Activated CD4-positive, alpha-beta T cell treated with anti-CD3 and anti-CD28 coated beads, Interleukin-2, amount 10 ng/mL, durations not matched to agents 24 days and 14 days (primary cell): ENCODE measurements at regions of chr12 and their contacts with region 1.

Region 1: DNA sequence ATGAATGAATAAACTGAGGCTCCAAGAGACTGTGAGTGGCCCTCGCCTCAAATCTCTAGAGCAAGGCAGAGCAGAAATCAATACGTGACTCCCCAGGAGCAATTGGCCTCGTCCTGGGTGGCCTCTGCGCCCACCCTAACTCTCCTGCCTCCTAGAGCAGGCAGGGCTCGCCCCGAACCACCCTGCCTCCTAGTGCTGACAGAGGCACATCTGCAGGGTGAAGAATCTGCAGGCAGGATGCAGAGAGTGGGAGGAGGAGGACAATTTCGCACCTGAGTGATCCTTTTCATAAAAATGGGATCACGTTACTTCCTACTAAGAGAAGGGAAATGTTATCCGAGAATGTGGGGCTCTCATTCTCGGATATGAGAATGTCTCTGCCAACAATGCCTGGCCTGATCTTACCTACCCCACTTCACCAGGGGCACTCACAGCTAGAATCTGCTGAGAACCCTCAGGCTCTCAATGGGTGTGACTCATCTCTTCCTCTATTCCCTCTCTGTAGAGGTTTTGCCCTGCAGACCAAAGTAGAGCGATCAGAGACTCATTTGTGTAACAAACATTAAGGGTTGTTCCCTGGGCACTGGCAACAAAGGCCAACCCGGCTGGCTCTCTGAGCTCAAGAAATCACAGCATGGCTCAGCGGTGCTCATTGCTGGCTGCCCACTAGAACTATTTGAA is 61.7 kb upstream of the BCL2L14 start:
- DNase-seq: peak; percentile 89
- H3K4me3 Mint-ChIP-seq: peak overlapping the region; percentile 74
- H3K27ac Mint-ChIP-seq: peak overlapping the region; percentile 97
- H3K4me1 Mint-ChIP-seq: peaks cover 73% of the 10 kb centered on the region
- H3K27me3 Mint-ChIP-seq: peaks cover 2% of the 10 kb centered on the region

Region 2: GRCh38 chr12:11648831-11649702 is 360.0 kb before region 1 on chr12 and contains the start of gene ETV6:
- intact Hi-C with region 1: loop called (anchors 1 kb)
- DNase-seq: peak; percentile 94
- H3K4me3 Mint-ChIP-seq: peak within 1 kb of the TSS; percentile 91
- H3K27ac Mint-ChIP-seq: peak within 1 kb of the TSS; percentile 97
- H3K4me1 Mint-ChIP-seq: peaks cover 25% of the 10 kb centered on the region
- H3K27me3 Mint-ChIP-seq: no peaks in the 10 kb centered on the region
- total RNA-seq, gene ETV6: 114 and 119 TPM in 2 replicates

Region 3: GRCh38 chr12:11765817-11766794 is 243.0 kb before region 1 on chr12:
- intact Hi-C with region 1: loop called (anchors 1 kb)
- DNase-seq: peak; percentile 74
- H3K4me3 Mint-ChIP-seq: peak overlapping the region; percentile 69
- H3K27ac Mint-ChIP-seq: peak overlapping the region; percentile 95
- H3K4me1 Mint-ChIP-seq: peaks cover 90% of the 10 kb centered on the region
- H3K27me3 Mint-ChIP-seq: no peaks in the 10 kb centered on the region

Region 4: DNA sequence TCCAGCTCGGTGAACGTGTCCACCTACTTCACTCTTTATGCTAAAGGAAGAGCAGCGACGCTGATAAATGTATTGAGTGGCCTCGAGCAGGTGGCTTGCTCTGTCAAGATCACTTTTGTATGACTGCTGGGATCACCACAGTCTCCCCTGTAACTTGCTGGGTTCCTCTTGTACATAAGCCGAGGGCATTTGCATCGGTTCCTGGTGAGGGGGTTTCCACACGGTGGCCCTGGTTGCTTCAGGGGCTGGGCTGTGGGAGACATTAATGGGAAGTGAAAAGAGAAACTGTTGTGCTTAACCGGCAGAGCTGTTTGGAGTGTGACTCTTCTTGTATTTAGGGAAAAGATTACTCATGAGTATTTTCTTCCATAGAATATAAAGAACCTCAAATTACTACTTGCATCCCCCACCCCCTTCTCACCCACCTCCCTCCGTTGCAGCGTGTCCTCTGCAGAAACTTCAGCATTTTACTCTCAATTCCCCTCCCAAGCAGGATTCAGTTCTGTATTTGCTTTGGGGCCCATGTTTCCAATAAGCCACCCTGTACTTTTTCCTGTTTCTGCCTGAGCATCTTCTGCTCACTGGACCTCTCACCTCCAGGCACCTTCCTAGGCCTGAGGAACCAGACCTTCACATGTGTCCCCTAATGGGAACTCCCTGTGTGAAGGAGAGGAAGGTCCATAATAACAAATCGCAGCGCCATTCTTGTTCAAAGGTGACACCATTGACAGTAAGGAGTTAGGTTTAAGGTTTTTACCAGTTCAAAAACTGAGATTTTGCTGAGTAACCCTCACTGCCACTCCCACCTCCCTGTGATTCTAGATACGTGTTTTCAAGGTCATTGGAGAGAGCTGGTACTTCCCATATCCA is 172.6 kb before region 1 on chr12:
- intact Hi-C with region 1: loop called (anchors 1 kb)
- DNase-seq: peak; percentile 84
- H3K4me3 Mint-ChIP-seq: peak overlapping the region; percentile 55
- H3K27ac Mint-ChIP-seq: peak overlapping the region; percentile 97
- H3K4me1 Mint-ChIP-seq: peaks cover 76% of the 10 kb centered on the region
- H3K27me3 Mint-ChIP-seq: no peaks in the 10 kb centered on the region

Region 5: GRCh38 chr12:11981121-11981733 is 27.8 kb before region 1 on chr12:
- intact Hi-C with region 1: loop called (anchors 1 kb)
- DNase-seq: peak; percentile 92
- H3K4me3 Mint-ChIP-seq: peak overlapping the region; percentile 68
- H3K27ac Mint-ChIP-seq: peak overlapping the region; percentile 99
- H3K4me1 Mint-ChIP-seq: peaks cover 62% of the 10 kb centered on the region
- H3K27me3 Mint-ChIP-seq: no peaks in the 10 kb centered on the region

Region 6: GRCh38 chr12:12442548-12443071 is 433.5 kb after region 1 on chr12:
- intact Hi-C with region 1: loop called (anchors 1 kb)
- DNase-seq: no peak
- H3K4me3 Mint-ChIP-seq: peak overlapping the region; percentile 21
- H3K27ac Mint-ChIP-seq: peak overlapping the region; percentile 91
- H3K4me1 Mint-ChIP-seq: peaks cover 64% of the 10 kb centered on the region
- H3K27me3 Mint-ChIP-seq: no peaks in the 10 kb centered on the region